Activated CD4-positive, alpha-beta T cell treated with anti-CD3 and anti-CD28 coated beads for 36 hours (primary cell): ENCODE measurements at regions of chr15 and their contacts with region 1.

Region 1: GRCh38 chr15:74598126-74598842 is 17.4 kb upstream of the CLK3 start:
- DNase-seq: peak; percentile 94
- ATAC-seq: peak; percentile 99
- H3K4me3 Mint-ChIP-seq: peak overlapping the region; percentile 90
- H3K27ac Mint-ChIP-seq: peak overlapping the region; percentile 99
- H3K4me1 Mint-ChIP-seq: peaks cover 20% of the 10 kb centered on the region
- H3K27me3 Mint-ChIP-seq: no peaks in the 10 kb centered on the region

Region 2: GRCh38 chr15:74545880-74546656 is 52.2 kb before region 1 on chr15:
- CTCF ChIA-PET with region 1: no interaction called
- POLR2A ChIA-PET with region 1: interaction called, 4 read pairs
- intact Hi-C with region 1: loop called (anchors 1 kb)
- DNase-seq: peak; percentile 98
- ATAC-seq: peak; percentile 72
- H3K4me3 Mint-ChIP-seq: peak overlapping the region; percentile 29
- H3K27ac Mint-ChIP-seq: peak overlapping the region; percentile 44
- H3K4me1 Mint-ChIP-seq: peaks cover 62% of the 10 kb centered on the region
- H3K27me3 Mint-ChIP-seq: peaks cover 2% of the 10 kb centered on the region

Region 3: GRCh38 chr15:74573987-74574386 is 24.3 kb before region 1 on chr15:
- CTCF ChIA-PET with region 1: no interaction called
- POLR2A ChIA-PET with region 1: no interaction called
- intact Hi-C with region 1: no loop called
- DNase-seq: peak; percentile 44
- ATAC-seq: peak; percentile 97
- H3K4me3 Mint-ChIP-seq: no peak overlapping the region
- H3K27ac Mint-ChIP-seq: peak overlapping the region; percentile 34
- H3K4me1 Mint-ChIP-seq: peaks cover 6% of the 10 kb centered on the region
- H3K27me3 Mint-ChIP-seq: no peaks in the 10 kb centered on the region